ENCODE measurements at regions of chr14 and their contacts with region 1.

Region 1: DNA sequence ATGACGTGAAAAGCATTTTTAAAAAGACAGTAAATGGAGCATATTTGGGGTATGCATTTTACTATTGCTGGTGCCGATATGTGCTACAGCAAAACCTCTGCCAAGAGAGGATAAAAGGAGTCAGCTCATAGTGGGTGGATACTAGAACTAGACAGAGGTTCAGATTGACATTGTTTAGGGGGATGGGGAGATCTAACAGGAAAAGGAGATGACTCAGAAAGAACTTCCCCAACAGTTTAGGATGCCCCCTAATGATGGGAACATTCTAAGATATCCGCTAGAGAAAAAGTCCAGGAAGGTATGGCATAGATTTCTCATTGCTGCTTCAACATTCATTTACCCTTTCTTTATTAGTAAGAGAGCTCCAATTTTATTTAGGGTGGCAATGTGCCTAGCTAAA is 110.5 kb upstream of the CLEC14A start:
- DNase-seq: no peak
- ATAC-seq: no peak

Region 2: DNA sequence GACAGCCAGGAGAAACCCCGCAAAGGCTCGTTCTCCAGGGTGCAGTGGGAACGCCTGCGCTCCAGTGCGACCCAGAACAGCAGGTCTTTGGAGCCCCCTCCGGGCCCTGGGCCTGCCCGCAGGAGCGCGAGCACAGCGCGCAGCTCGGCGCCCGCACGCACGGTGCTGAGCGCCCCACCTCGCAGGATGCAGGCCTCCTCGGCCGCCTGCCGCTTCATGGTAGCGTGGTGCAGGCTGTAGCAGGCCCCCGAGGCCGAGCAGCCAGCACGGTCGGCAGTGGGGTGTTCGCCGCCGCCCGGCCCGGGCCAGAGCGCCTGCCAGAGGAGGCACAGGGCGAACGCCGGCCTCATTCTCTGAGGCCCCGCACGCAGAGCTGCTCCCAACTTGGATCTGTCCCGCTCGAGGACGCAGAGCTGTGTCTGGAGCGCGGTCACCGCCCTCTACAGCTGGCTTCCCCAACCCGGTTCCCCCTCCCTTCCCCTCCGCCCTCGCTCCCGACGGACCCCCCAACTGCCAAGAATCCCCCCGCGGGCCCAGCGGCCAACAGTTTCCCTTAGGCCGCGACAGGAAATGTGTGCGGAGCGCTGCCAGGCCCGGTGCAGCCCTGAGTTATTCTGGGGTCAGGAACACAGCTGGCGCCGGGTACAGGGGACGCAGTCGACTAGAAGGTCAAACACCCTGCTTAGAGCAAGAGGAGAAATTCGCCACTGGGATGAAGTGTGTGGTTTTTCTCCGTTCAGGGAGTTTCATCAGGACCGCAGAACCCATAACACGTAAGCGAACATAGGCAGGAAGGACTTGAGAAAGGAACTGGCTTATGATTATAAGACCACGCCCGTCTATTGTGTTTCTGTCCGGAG is 110.5 kb before region 1 on chr14 and contains the start of gene CLEC14A:
- intact Hi-C with region 1: loop called (anchors 10 kb)
- DNase-seq: peak; percentile 87
- ATAC-seq: peak; percentile 88
- total RNA-seq, gene CLEC14A: 28.8 TPM